PC-9 (cell line): ENCODE measurements at regions of chr11 and their contacts with region 1.

Region 1: GRCh38 chr11:19508159-19508558 is 204.5 kb upstream of the NAV2 start:
- DNase-seq: peak; percentile 36 to 84
- H3K4me3 ChIP-seq: no peak overlapping the region
- H3K27ac ChIP-seq: peak overlapping the region; percentile 58
- H3K4me1 ChIP-seq: peaks cover 33% of the 10 kb centered on the region
- H3K27me3 ChIP-seq: no peaks in the 10 kb centered on the region
- CTCF ChIP-seq: no peak

Region 2: DNA sequence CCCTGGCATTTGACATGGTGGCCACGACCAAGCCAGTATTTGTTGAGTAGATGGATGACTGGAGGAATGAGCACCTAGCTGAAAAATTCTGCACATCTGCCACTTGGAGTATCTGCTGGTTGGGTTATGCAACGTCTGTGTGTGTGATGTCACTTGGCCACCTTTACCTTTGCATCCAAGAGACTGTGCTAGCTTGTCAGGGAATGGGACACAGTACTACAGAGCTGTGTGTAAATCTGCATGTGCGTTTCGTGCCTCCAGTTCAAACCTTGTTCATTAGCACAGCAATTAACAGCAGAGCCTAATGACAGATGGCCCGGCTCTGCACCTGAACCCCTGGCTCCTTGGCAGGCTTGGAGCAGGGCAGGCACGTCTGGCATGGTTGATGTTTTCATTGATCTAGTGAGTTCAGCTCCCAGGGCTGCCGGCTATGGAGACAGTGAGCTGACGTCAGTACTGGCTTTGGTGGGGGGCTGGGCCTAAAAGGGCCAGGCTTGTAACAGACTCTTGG is 16.1 kb after region 1 on chr11:
- CTCF ChIA-PET with region 1: interaction called, 15 read pairs
- POLR2A ChIA-PET with region 1: no interaction called
- intact Hi-C with region 1: no loop called
- DNase-seq: no peak
- H3K4me3 ChIP-seq: no peak overlapping the region
- H3K27ac ChIP-seq: no peak overlapping the region
- H3K4me1 ChIP-seq: peaks cover 29% of the 10 kb centered on the region
- H3K27me3 ChIP-seq: no peaks in the 10 kb centered on the region
- CTCF ChIP-seq: no peak